Transverse colon (tissue), 4 donors: ENCODE measurements at regions of chr9 and their contacts with region 1.

Region 1: GRCh38 chr9:136728080-136728547 is 14.6 kb downstream of the LCN10 start:
- DNase-seq: peak; percentile 92
- H3K4me3 ChIP-seq: peak overlapping the region; percentile 65 to 90 (median 70)
- H3K27ac ChIP-seq: peak overlapping the region; percentile 80 to 86 (median 84)
- H3K4me1 ChIP-seq: peaks cover 15 to 34% (median 27%) of the 10 kb centered on the region in 4 donors
- H3K27me3 ChIP-seq: no peaks in the 10 kb centered on the region
- CTCF ChIP-seq: peak; percentile 77 to 95 (median 87)
- EP300 ChIP-seq: no peak
- POLR2A ChIP-seq: peak; percentile 99

Region 2: GRCh38 chr9:136686794-136687711 is 41.1 kb before region 1 on chr9 and contains the start of gene AGPAT2:
- in situ Hi-C with region 1: no loop called
- intact Hi-C with region 1: loop called (anchors 5 kb)
- DNase-seq: peak; percentile 92
- H3K4me3 ChIP-seq: peak within 1 kb of the TSS; percentile 64 to 87 (median 78)
- H3K27ac ChIP-seq: peak within 1 kb of the TSS; percentile 88 to 94 (median 90)
- H3K4me1 ChIP-seq: peaks cover 28 to 64% (median 38%) of the 10 kb centered on the region in 4 donors
- H3K27me3 ChIP-seq: no peaks in the 10 kb centered on the region
- CTCF ChIP-seq: peak in 1 of 5 experiments; percentile 24
- EP300 ChIP-seq: no peak
- POLR2A ChIP-seq: peak; percentile 78
- total RNA-seq, gene AGPAT2: 245 to 441 (median 290) TPM

Region 3: GRCh38 chr9:136849038-136849959 is 121.2 kb after region 1 on chr9 and contains the start of gene PHPT1:
- in situ Hi-C with region 1: no loop called
- intact Hi-C with region 1: no loop called
- DNase-seq: peak; percentile 98
- H3K4me3 ChIP-seq: peak within 1 kb of the TSS; percentile 55 to 81 (median 66)
- H3K27ac ChIP-seq: peak within 1 kb of the TSS; percentile 89 to 97 (median 94)
- H3K4me1 ChIP-seq: peaks cover 14 to 47% (median 28%) of the 10 kb centered on the region in 4 donors
- H3K27me3 ChIP-seq: peaks cover 28% of the 10 kb centered on the region
- CTCF ChIP-seq: no peak
- EP300 ChIP-seq: peak; percentile 27
- POLR2A ChIP-seq: peak; percentile 85
- total RNA-seq, gene PHPT1: 69.7 to 134 (median 107) TPM